Activated CD4-positive, alpha-beta memory T cell treated with anti-CD3 and anti-CD28 coated beads for 36 hours (primary cell): ENCODE measurements at regions of chr5 and their contacts with region 1.

Region 1: DNA sequence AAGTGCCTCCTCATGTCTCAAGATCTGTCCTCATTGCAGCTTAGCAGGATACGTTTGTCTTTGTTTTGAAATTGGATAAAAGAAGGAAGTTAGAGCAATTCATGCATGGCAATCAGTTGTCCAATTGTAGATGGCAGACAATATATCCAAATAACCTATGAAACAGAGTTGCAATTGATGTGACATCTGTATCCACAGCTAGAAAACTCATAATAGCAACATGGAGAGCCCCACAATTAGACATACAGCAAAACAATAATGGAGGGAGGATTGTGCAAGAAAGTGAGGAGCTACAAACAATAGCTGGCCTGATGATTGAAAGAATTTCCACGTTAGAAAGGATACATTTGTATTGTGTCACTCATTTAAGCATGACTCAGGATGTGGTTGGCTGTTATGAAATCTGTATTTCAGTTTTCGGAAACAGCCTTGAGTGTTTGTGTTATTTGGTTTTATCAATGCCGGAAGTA is 132.0 kb downstream of the FAM174A start:
- DNase-seq: no peak
- H3K4me3 Mint-ChIP-seq: no peak overlapping the region
- H3K27ac Mint-ChIP-seq: no peak overlapping the region
- H3K4me1 Mint-ChIP-seq: peaks cover 10% of the 10 kb centered on the region
- H3K27me3 Mint-ChIP-seq: no peaks in the 10 kb centered on the region

Region 2: DNA sequence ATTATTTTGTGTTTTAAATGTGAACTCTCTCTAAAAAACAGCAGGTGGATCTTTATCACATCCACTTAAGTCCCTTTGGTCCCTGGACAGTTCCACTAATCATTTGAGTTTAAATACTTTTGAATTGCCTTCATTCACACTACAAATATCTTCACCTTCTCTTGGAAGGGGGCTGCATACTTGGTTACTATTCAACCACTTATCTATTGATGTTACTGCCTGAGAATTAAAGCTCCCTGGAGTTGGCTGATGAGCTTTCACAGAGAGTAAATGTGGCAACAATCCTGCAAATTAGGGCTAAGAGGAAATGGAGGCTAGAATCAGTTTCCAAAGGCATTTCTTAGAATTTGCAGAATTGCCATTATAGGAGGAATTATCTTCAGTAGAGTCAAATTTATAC is 55.5 kb after region 1 on chr5:
- CTCF ChIA-PET with region 1: no interaction called
- POLR2A ChIA-PET with region 1: no interaction called
- intact Hi-C with region 1: loop called (anchors 5 kb)
- DNase-seq: no peak
- H3K4me3 Mint-ChIP-seq: no peak overlapping the region
- H3K27ac Mint-ChIP-seq: no peak overlapping the region
- H3K4me1 Mint-ChIP-seq: no peaks in the 10 kb centered on the region
- H3K27me3 Mint-ChIP-seq: no peaks in the 10 kb centered on the region